Tibial artery (tissue), 4 donors: ENCODE measurements at regions of chr21 and their contacts with region 1.

Region 1: GRCh38 chr21:33403779-33404585 is 769 bp downstream of the IFNGR2 start:
- DNase-seq: peak; percentile 49 to 80
- H3K4me3 ChIP-seq: peak overlapping the region; percentile 65 to 81
- H3K27ac ChIP-seq: peak overlapping the region; percentile 91 to 96
- H3K4me1 ChIP-seq: peaks cover 0 to 46% (median 22%) of the 10 kb centered on the region in 4 donors
- H3K27me3 ChIP-seq: no peaks in the 10 kb centered on the region
- CTCF ChIP-seq: no peak

Region 2: DNA sequence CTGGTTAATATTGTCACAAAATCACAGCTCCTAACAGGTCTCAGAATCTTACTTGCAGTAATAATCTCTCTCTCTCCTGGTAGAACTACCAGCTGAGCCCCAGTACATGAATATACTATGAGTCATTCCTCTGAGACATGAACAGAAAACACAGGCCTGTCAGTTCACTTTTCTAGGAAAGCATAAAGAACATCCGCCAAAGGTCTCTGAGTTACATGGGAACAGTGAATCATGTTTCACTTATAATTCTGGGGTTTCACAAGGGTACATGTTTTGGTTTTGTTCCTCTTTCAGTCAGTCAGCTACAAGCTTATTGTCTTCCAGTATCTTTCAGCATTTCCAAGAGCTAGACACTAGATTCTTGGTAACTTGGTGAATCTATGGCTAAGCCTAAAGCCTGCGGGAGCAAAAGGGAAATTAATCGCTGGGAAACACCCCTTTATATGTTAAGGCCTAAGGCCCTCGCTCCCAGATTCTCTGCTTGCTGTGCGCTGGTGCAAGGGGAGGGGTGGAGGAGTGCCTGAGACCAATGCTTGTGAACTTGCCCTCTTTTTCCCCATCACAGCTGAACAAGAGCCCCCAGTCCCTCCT is 30.9 kb after region 1 on chr21:
- intact Hi-C with region 1: loop called (anchors 5 kb)
- DNase-seq: no peak
- H3K4me3 ChIP-seq: no peak overlapping the region
- H3K27ac ChIP-seq: peak overlapping the region; percentile 78 to 83
- H3K4me1 ChIP-seq: peaks cover 4 to 27% (median 18%) of the 10 kb centered on the region in 4 donors
- H3K27me3 ChIP-seq: no peaks in the 10 kb centered on the region
- CTCF ChIP-seq: no peak

Region 3: GRCh38 chr21:33531007-33531406 is 127.0 kb after region 1 on chr21:
- intact Hi-C with region 1: no loop called
- DNase-seq: no peak
- H3K4me3 ChIP-seq: no peak overlapping the region
- H3K27ac ChIP-seq: no peak overlapping the region
- H3K4me1 ChIP-seq: no peaks in the 10 kb centered on the region
- H3K27me3 ChIP-seq: no peaks in the 10 kb centered on the region
- CTCF ChIP-seq: no peak

Region 4: GRCh38 chr21:34073870-34074781 is 670.1 kb after region 1 on chr21:
- intact Hi-C with region 1: no loop called
- DNase-seq: no peak
- H3K4me3 ChIP-seq: peak overlapping the region; percentile 77 to 84
- H3K27ac ChIP-seq: peak overlapping the region; percentile 79 to 92
- H3K4me1 ChIP-seq: peaks cover 0 to 57% (median 14%) of the 10 kb centered on the region in 4 donors
- H3K27me3 ChIP-seq: no peaks in the 10 kb centered on the region
- CTCF ChIP-seq: no peak

Region 5: GRCh38 chr21:34133802-34134201 is 729.8 kb after region 1 on chr21:
- intact Hi-C with region 1: no loop called
- DNase-seq: no peak
- H3K4me3 ChIP-seq: no peak overlapping the region
- H3K27ac ChIP-seq: peak overlapping the region; percentile 63 to 77
- H3K4me1 ChIP-seq: peaks cover 0 to 63% (median 49%) of the 10 kb centered on the region in 4 donors
- H3K27me3 ChIP-seq: no peaks in the 10 kb centered on the region
- CTCF ChIP-seq: peak in 1 of 2 experiments; percentile 19